ENCODE measurements at regions of chr10 and their contacts with region 1.

Region 1: DNA sequence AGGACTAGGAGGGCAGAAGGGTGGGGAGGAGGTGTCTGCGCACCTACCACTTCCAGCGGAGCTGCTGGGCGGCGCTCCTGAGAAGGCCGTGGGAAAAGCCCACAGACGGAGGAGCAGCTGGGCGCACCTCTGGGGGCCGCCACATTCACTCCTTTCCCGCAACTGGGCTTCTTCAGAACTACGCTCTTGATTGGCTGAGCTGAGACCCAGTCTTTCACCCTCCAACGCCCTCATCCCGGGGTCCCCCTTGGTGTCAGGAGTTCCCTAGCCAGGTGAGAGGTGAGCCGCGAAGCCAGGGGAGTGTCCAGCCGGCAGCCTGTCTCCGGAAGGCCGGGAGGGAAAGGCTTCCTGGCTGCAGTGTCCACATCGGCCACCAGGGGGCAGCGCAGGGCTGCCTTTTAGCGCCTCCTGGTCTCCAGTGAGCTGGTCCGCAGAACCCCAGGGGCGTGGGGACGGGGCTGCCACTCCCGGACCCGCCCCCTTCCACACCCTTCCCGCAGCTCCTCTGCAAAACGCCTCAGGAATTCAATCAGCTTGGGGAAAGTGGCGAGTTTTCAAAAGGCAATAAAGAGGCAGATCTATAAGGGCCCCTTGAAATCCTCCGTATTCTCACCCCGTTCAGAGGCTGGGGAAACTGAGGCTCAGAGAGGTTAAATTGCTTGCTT is 98.8 kb downstream of the CHST15 start:
- DNase-seq: peak; percentile 56
- ATAC-seq: peak; percentile 73
- H3K4me3 ChIP-seq: peak overlapping the region in 1 of 3 experiments; percentile 54; a peak in 2 of 6 replicates
- H3K27ac ChIP-seq: no peak overlapping the region
- H3K4me1 ChIP-seq: peaks cover 41% of the 10 kb centered on the region
- H3K27me3 ChIP-seq: peaks cover 3 to 9% of the 10 kb centered on the region in 2 experiments; a peak in 3 of 5 replicates
- CTCF ChIP-seq: peak; percentile 98
- EP300 ChIP-seq: no peak
- POLR2A ChIP-seq: no peak
- RAD21 ChIP-seq: peak; percentile 97

Region 2: DNA sequence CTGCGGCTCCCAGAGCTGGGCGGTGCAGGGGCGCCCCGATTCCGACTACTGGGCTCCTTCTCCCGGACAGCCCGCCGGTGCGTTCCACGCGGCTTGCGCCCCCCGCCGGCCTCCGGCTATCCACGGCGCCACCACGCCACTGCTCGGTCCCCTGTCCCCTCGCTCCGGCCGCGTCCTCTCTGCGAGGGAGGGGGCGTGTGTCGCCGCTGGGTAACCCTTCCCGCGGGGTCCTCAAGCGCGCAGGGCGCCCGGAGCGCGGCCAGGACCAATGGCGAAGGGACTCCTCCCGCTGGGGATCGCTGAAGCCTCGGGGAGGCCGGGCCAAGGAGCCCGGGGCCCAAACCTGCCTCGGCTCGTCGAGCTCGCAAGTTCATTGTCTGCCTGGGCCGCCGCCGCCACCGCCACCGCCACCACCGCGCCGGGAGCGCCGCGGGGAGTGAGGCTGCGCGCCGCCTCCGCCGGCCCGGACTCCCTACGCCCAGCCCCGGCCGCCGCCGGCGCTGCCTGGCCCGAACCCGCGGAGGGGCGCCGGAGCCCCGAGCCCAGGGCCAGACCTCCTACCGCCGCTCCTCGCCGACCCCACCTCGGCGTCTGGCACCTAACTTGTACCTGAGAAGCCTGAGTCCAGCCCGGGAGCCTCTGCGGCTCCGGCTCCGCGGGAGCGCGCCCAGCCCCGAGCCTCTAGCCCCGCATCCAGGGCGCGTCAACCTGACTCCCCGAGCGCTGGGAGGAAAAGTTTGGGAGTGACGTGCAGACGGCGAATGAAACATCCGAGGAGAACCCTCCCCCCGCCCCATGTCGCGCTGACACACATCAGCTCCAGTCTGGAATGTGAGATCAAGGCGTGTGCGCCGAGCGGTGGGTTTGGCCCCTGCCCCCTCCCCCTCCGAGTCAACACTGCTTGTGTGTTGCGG is 98.6 kb after region 1 on chr10 and contains the start of gene CHST15:
- CTCF ChIA-PET with region 1: interaction called, 3 read pairs
- POLR2A ChIA-PET with region 1: no interaction called
- in situ Hi-C with region 1: loop called (anchors 5 kb)
- intact Hi-C with region 1: no loop called
- DNase-seq: peak; percentile 86
- ATAC-seq: peak; percentile 57
- H3K4me3 ChIP-seq: peak within 1 kb of the TSS; percentile 86 to 91 (median 91)
- H3K27ac ChIP-seq: peak within 1 kb of the TSS; percentile 59
- H3K4me1 ChIP-seq: peaks cover 76% of the 10 kb centered on the region
- H3K27me3 ChIP-seq: peaks cover 0 to 36% of the 10 kb centered on the region in 2 experiments; a peak in 3 of 5 replicates
- CTCF ChIP-seq: peak; percentile 50
- EP300 ChIP-seq: peak in 1 of 2 experiments; percentile 70; a peak in 2 of 4 replicates
- POLR2A ChIP-seq: peak in 1 of 2 experiments; percentile 68; a peak in 3 of 4 replicates
- RAD21 ChIP-seq: 0 out of 2 replicates have a peak, but pooled peaks have one; percentile 32
- total RNA-seq, gene CHST15: 1.1 and 1.4 TPM in 2 replicates

Region 3: GRCh38 chr10:124152916-124153826 is 158.6 kb after region 1 on chr10:
- CTCF ChIA-PET with region 1: no interaction called
- POLR2A ChIA-PET with region 1: no interaction called
- in situ Hi-C with region 1: no loop called
- intact Hi-C with region 1: loop called (anchors 10 kb)
- DNase-seq: peak; percentile 54
- ATAC-seq: peak; percentile 58
- H3K4me3 ChIP-seq: no peak overlapping the region; a peak in 1 of 6 replicates
- H3K27ac ChIP-seq: no peak overlapping the region
- H3K4me1 ChIP-seq: peaks cover 43% of the 10 kb centered on the region
- H3K27me3 ChIP-seq: peaks cover 0 to 8% of the 10 kb centered on the region in 2 experiments; a peak in 4 of 5 replicates
- CTCF ChIP-seq: no peak
- EP300 ChIP-seq: no peak
- POLR2A ChIP-seq: no peak
- RAD21 ChIP-seq: no peak

Region 4: GRCh38 chr10:124217906-124218804 is 223.6 kb after region 1 on chr10:
- CTCF ChIA-PET with region 1: no interaction called
- POLR2A ChIA-PET with region 1: no interaction called
- in situ Hi-C with region 1: no loop called
- intact Hi-C with region 1: loop called (anchors 1 kb)
- DNase-seq: no peak
- ATAC-seq: peak; percentile 49; the same call in 2 of the 3 replicates
- H3K4me3 ChIP-seq: no peak overlapping the region
- H3K27ac ChIP-seq: no peak overlapping the region
- H3K4me1 ChIP-seq: no peaks in the 10 kb centered on the region
- H3K27me3 ChIP-seq: peaks cover 2 to 40% of the 10 kb centered on the region in 2 experiments; a peak in 3 of 5 replicates
- CTCF ChIP-seq: peak; percentile 39; the same call in 1 of the 2 replicates
- EP300 ChIP-seq: no peak
- POLR2A ChIP-seq: no peak
- RAD21 ChIP-seq: no peak

Region 5: GRCh38 chr10:124259139-124259825 is 264.7 kb after region 1 on chr10:
- CTCF ChIA-PET with region 1: no interaction called
- POLR2A ChIA-PET with region 1: no interaction called
- in situ Hi-C with region 1: loop called (anchors 25 kb)
- intact Hi-C with region 1: loop called (anchors 10 kb)
- DNase-seq: peak; percentile 47
- ATAC-seq: peak; percentile 86
- H3K4me3 ChIP-seq: no peak overlapping the region
- H3K27ac ChIP-seq: no peak overlapping the region
- H3K4me1 ChIP-seq: no peaks in the 10 kb centered on the region
- H3K27me3 ChIP-seq: peaks cover 8 to 46% of the 10 kb centered on the region in 2 experiments
- CTCF ChIP-seq: peak; percentile 55
- EP300 ChIP-seq: no peak
- POLR2A ChIP-seq: no peak
- RAD21 ChIP-seq: peak; percentile 35; the same call in 1 of the 2 replicates

Region 6: DNA sequence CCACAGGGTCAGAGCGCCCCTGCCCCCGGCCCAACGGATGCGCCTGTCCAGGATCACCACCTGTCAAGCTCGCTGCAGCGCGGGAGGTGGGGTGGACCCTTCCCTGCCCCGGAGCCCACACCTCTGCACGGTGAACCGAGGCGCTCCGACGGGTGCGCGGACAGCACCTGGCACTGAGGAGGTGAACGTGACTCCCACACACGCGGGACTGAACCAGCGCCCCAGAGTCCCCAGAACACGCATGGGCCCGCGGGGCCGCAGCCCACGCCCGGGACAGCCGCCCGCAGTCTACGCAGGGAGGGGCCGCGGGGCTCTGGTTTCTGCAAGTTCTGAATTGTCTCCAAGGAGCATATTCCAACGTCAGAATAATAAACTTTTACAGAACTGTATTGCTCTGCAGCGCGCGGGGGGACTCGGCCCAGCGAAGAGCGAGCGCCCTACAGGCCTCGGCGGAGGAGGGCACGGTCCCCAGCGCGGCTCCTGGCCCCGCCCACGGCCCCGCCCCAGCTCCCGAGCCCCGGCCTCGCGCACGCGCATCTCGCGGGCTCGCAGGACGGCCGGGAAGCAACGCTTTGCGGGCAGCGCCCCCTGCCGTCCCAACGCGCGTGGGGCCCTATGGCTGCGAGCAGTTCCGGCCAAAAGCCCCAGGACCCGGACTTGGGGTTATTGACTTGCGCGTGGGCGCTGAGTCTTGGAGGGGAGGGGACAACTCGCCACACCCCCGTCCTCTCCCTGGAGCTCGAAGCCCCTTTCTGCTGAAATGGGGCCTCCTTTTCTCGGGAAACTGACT is 394.5 kb after region 1 on chr10:
- CTCF ChIA-PET with region 1: interaction called, 35 read pairs
- POLR2A ChIA-PET with region 1: interaction called, 6 read pairs
- in situ Hi-C with region 1: loop called (anchors 5 kb)
- intact Hi-C with region 1: loop called (anchors 1 kb)
- DNase-seq: peak; percentile 65
- ATAC-seq: peak; percentile 91
- H3K4me3 ChIP-seq: peak overlapping the region in 2 of 3 experiments; percentile 10 to 58; a peak in 3 of 6 replicates
- H3K27ac ChIP-seq: no peak overlapping the region
- H3K4me1 ChIP-seq: peaks cover 18% of the 10 kb centered on the region; the same call in 1 of the 2 replicates
- H3K27me3 ChIP-seq: peaks cover 3 to 38% of the 10 kb centered on the region in 2 experiments; a peak in 4 of 5 replicates
- CTCF ChIP-seq: peak; percentile 95
- EP300 ChIP-seq: no peak
- POLR2A ChIP-seq: no peak
- RAD21 ChIP-seq: peak; percentile 98

Measured in HepG2 (cell line).